Activated naive CD4-positive, alpha-beta T cell treated with anti-CD3 and anti-CD28 coated beads for 36 hours (primary cell): ENCODE measurements at regions of chr2 and their contacts with region 1.

Region 1: GRCh38 chr2:173571021-173571882 is 216.6 kb downstream of the CDCA7 start:
- DNase-seq: peak; percentile 8
- H3K4me3 Mint-ChIP-seq: no peak overlapping the region
- H3K27ac Mint-ChIP-seq: no peak overlapping the region
- H3K4me1 Mint-ChIP-seq: peaks cover 4% of the 10 kb centered on the region
- H3K27me3 Mint-ChIP-seq: peaks cover 6% of the 10 kb centered on the region

Region 2: GRCh38 chr2:174078275-174078674 is 507.0 kb after region 1 on chr2:
- CTCF ChIA-PET with region 1: no interaction called
- intact Hi-C with region 1: loop called (anchors 2 kb)
- DNase-seq: no peak
- H3K4me3 Mint-ChIP-seq: no peak overlapping the region
- H3K27ac Mint-ChIP-seq: no peak overlapping the region
- H3K4me1 Mint-ChIP-seq: no peaks in the 10 kb centered on the region
- H3K27me3 Mint-ChIP-seq: no peaks in the 10 kb centered on the region